ENCODE measurements at regions of chr3 and their contacts with region 1.

Region 1: DNA sequence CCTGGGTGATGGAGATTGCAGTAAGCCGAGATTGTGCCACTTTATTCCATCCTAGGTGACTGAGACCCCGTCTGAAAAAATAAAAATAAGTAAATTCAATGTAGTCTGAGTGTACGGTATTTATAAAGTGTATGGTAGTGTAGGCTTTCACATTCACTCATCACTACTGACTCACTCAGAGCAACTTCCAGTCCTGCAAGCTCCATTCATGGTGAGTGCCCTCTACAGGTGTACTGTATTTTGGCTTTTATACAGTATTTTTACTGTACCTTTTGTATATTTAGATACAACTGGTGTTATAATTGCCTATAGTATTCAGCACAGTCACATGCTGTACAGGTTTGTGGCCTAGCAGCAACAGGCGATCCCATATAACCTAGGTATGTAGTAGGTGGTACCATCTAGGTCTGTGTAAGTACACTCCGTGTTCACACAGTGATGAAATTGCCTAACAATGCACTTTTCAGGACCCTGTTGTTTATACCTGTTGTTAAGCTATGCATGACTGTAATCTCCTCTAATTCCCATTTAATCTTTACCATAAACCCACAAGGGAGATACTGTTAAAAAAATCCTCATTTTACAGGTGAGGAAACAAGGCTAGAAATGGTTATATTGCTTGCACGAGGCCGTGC is 19.3 kb downstream of the CACNA1D start:
- DNase-seq: peak; percentile 13
- H3K4me3 Mint-ChIP-seq: no peak overlapping the region
- H3K27ac Mint-ChIP-seq: no peak overlapping the region
- H3K4me1 Mint-ChIP-seq: no peaks in the 10 kb centered on the region
- H3K27me3 Mint-ChIP-seq: peaks cover 15% of the 10 kb centered on the region

Region 2: DNA sequence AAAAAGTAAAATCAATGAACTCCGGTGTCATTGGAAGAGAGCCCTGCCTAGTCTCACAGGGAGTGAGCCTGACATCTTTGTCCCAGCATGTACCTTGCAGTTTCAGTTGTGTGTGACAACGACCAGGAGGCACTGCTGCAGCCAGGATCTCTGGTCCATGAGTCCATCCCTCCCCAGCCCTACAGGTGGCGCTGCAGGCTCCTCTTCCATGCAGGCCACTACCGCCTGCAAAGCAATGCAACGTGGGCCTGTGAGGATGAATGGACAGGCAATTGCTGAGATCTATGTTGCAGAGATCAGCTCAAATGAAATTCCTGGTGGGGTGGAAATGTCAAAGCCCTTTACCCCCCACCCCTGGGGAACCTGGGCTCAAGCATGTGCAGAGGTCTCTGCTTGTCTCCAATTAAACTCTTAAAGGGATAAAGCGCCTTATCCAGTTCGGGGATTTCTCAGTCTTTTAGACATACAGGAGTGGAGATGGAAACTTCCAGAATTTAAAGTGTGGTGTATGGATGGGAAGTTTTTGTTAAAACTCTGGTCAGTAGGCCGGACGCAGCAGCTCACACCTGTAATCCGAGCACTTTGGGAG is 293.7 kb before region 1 on chr3:
- CTCF ChIA-PET with region 1: no interaction called
- POLR2A ChIA-PET with region 1: no interaction called
- intact Hi-C with region 1: loop called (anchors 5 kb)
- DNase-seq: peak; percentile 91
- H3K4me3 Mint-ChIP-seq: no peak overlapping the region
- H3K27ac Mint-ChIP-seq: no peak overlapping the region
- H3K4me1 Mint-ChIP-seq: no peaks in the 10 kb centered on the region
- H3K27me3 Mint-ChIP-seq: no peaks in the 10 kb centered on the region

Region 3: GRCh38 chr3:53375019-53375418 is 138.7 kb before region 1 on chr3:
- CTCF ChIA-PET with region 1: interaction called, 4 read pairs
- POLR2A ChIA-PET with region 1: no interaction called
- intact Hi-C with region 1: loop called (anchors 1 kb)
- DNase-seq: peak; percentile 75
- H3K4me3 Mint-ChIP-seq: no peak overlapping the region
- H3K27ac Mint-ChIP-seq: no peak overlapping the region
- H3K4me1 Mint-ChIP-seq: no peaks in the 10 kb centered on the region
- H3K27me3 Mint-ChIP-seq: peaks cover 22% of the 10 kb centered on the region

Region 4: GRCh38 chr3:53525765-53526703 is 12.4 kb after region 1 on chr3:
- CTCF ChIA-PET with region 1: interaction called, 10 read pairs
- POLR2A ChIA-PET with region 1: no interaction called
- intact Hi-C with region 1: no loop called
- DNase-seq: no peak
- H3K4me3 Mint-ChIP-seq: no peak overlapping the region
- H3K27ac Mint-ChIP-seq: no peak overlapping the region
- H3K4me1 Mint-ChIP-seq: no peaks in the 10 kb centered on the region
- H3K27me3 Mint-ChIP-seq: peaks cover 3% of the 10 kb centered on the region

Region 5: GRCh38 chr3:53881691-53882593 is 368.3 kb after region 1 on chr3 and contains the start of gene ACTR8:
- CTCF ChIA-PET with region 1: no interaction called
- POLR2A ChIA-PET with region 1: no interaction called
- intact Hi-C with region 1: no loop called
- DNase-seq: peak; percentile 88
- H3K4me3 Mint-ChIP-seq: peak within 1 kb of the TSS; percentile 89
- H3K27ac Mint-ChIP-seq: peak within 1 kb of the TSS; percentile 90
- H3K4me1 Mint-ChIP-seq: peaks cover 23% of the 10 kb centered on the region
- H3K27me3 Mint-ChIP-seq: no peaks in the 10 kb centered on the region
- total RNA-seq, gene ACTR8: 32.0 to 33.1 TPM